ENCODE measurements at regions of chr9 and their contacts with region 1.

Region 1: GRCh38 chr9:88433583-88434255 is 45.5 kb downstream of the SPIN1 start:
- DNase-seq: peak; percentile 56
- ATAC-seq: no peak
- H3K4me3 ChIP-seq: no peak overlapping the region
- H3K27ac ChIP-seq: no peak overlapping the region
- H3K4me1 ChIP-seq: peaks cover 14% of the 10 kb centered on the region
- H3K27me3 ChIP-seq: no peaks in the 10 kb centered on the region
- CTCF ChIP-seq: no peak
- POLR2A ChIP-seq: no peak
- RAD21 ChIP-seq: no peak

Region 2: GRCh38 chr9:87973730-87974292 is 459.9 kb before region 1 on chr9:
- CTCF ChIA-PET with region 1: no interaction called
- POLR2A ChIA-PET with region 1: no interaction called
- dilution Hi-C with region 1: no loop called
- in situ Hi-C with region 1: no loop called
- intact Hi-C with region 1: no loop called
- DNase-seq: no peak
- ATAC-seq: no peak
- H3K4me3 ChIP-seq: peak overlapping the region; percentile 65
- H3K27ac ChIP-seq: no peak overlapping the region
- H3K4me1 ChIP-seq: 0 out of 2 replicates have a peak, but pooled peaks cover 2% of the 10 kb centered on the region
- H3K27me3 ChIP-seq: no peaks in the 10 kb centered on the region
- CTCF ChIP-seq: no peak
- POLR2A ChIP-seq: no peak; the same call in 1 of the 2 replicates
- RAD21 ChIP-seq: no peak

Region 3: DNA sequence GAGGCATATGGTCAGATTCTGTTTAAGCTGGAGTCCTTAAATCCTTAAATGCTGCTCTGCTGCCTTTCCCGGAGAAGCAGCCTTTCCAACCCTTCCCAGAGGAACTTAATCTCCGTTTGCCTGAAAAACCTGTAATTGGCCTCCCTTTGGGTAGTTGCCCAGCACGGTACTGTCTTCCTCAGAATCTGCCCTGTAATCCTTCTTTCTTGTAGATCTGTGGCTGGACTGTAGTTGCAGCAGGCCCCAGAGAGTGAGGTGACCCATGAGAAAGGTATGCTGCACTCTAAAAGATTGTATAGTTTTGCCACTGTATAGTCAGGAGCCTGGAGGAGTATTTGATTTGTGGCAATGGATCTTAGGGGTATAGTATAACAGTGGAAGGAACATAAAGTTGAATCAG is 33.8 kb before region 1 on chr9:
- CTCF ChIA-PET with region 1: no interaction called
- POLR2A ChIA-PET with region 1: no interaction called
- dilution Hi-C with region 1: no loop called
- in situ Hi-C with region 1: no loop called
- intact Hi-C with region 1: loop called (anchors 5 kb)
- DNase-seq: peak; percentile 92
- ATAC-seq: peak; percentile 79
- H3K4me3 ChIP-seq: no peak overlapping the region
- H3K27ac ChIP-seq: peak overlapping the region; percentile 91
- H3K4me1 ChIP-seq: peaks cover 19% of the 10 kb centered on the region
- H3K27me3 ChIP-seq: no peaks in the 10 kb centered on the region
- CTCF ChIP-seq: no peak
- POLR2A ChIP-seq: no peak
- RAD21 ChIP-seq: no peak

Region 4: DNA sequence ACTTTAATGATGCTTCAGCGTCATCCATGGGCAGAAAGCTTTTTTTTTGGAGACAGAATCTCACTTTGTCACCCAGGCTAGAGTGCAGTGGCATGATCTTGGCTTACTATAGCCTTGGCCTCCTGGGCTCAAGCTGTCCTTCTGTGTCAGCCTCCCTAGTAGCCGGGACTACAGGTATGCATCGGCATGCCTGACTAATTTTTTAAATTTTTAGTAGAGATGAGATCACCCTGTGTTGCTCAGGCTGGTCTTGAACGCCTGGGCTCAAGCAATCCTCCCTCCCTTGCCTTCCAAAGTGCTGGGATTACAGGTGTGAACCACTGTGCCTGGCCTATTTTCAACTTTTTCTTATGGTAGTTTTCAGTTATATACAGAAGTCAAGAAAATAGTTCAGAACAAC is 22.2 kb before region 1 on chr9:
- CTCF ChIA-PET with region 1: no interaction called
- POLR2A ChIA-PET with region 1: no interaction called
- dilution Hi-C with region 1: no loop called
- in situ Hi-C with region 1: no loop called
- intact Hi-C with region 1: no loop called
- DNase-seq: no peak
- ATAC-seq: no peak
- H3K4me3 ChIP-seq: no peak overlapping the region
- H3K27ac ChIP-seq: no peak overlapping the region
- H3K4me1 ChIP-seq: no peaks in the 10 kb centered on the region
- H3K27me3 ChIP-seq: no peaks in the 10 kb centered on the region
- CTCF ChIP-seq: no peak
- POLR2A ChIP-seq: no peak
- RAD21 ChIP-seq: no peak